H1 (cell line): ENCODE measurements at regions of chr5 and their contacts with region 1.

Region 1: DNA sequence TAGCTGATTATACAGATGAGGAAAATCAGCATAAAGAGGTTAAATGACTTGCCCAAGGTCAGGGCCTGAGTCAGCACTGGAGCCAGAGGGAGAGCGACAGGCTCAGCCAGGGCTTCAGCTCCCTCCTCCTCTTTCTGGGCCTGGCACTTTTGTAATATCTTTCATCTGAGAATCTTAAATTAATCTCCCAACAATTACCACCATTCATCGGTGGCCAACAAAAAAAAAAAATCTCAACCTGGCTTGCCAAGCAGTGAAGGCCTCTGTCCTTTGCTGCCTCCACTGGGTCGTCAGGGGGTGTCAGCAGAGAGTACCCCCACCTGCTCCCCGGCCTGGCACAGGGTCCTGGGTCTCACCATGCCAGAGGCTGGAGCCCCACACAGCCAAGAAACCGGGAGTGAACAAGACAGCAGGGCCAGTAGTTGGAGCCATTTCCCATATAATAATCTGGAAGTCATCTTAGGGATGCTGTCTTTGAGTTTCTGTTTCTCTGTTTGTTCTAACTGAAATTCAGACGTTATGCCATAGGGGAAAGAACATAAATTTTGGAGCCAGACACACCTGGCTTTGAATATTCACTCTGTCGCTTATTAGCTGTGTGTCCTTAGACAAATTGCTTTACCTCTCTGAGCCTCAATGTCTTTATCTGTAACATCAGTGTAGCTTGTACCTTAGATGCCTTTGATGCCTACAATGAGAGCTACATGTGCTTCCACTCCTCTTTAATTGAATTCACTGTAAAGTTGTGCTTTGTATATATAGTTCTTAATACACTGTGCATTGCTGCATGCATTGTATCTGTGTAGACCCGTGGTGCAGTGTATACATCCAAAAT is 299.9 kb upstream of the MSX2 start:
- DNase-seq: no peak
- H3K4me3 ChIP-seq: no peak overlapping the region
- H3K27ac ChIP-seq: no peak overlapping the region
- H3K4me1 ChIP-seq: no peaks in the 10 kb centered on the region
- H3K27me3 ChIP-seq: peaks cover 0 to 3% (median under 1%) of the 10 kb centered on the region in 4 experiments; a peak in 2 of 7 replicates
- CTCF ChIP-seq: peak in 2 of 3 experiments; percentile 24 to 27; a peak in 3 of 4 replicates
- EP300 ChIP-seq: no peak
- POLR2A ChIP-seq: no peak
- RAD21 ChIP-seq: peak; percentile 34 to 49

Region 2: DNA sequence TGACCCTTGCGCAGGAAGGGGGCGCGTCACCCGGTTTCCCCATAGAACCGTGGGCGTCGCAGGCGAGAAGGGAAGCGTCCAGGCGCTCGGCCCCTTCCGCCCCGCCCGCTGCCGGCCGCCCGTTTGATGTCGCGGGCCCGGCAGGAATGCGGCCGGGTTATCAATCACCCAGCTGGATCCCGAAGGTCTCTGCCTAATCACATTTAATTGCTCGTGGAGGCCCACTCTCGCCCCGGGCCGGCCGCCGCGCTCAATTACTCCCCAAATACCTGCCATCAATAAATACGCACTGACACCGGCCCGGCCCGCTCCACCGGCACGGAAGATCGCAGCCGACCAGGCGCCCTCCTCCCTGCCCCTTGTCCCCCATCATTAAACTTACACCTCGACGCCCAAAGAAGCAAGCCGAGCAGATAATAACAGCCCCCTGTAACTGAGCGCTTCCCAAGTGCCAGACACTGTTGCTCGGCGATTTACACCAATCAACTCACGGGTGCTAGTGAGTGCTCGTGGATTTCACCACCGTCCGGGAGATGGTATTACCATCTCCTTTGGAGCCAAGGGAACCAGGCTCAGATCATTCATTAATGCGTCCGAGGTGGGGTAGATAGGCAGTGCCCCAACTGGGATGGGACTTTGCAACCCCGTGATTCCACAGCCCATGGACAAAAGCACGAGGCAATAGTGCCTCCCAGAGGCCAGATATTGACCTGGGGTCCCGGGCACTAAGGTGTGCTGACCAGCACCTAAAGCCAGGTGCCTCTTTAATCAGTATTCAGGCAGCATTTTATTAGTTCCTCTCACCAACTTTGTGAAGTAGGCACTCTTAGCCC is 311.3 kb after region 1 on chr5:
- CTCF ChIA-PET with region 1: interaction called, 37 read pairs
- POLR2A ChIA-PET with region 1: no interaction called
- DNase-seq: peak in 1 of 2 experiments; percentile 73
- H3K4me3 ChIP-seq: peak overlapping the region; percentile 38 to 67 (median 44)
- H3K27ac ChIP-seq: no peak overlapping the region
- H3K4me1 ChIP-seq: peaks cover 0 to 41% (median 17%) of the 10 kb centered on the region in 4 experiments; a peak in 6 of 7 replicates
- H3K27me3 ChIP-seq: peaks cover 51 to 74% (median 72%) of the 10 kb centered on the region in 4 experiments
- CTCF ChIP-seq: peak; percentile 74 to 82 (median 78)
- EP300 ChIP-seq: no peak
- POLR2A ChIP-seq: no peak
- RAD21 ChIP-seq: peak; percentile 94